ENCODE measurements at regions of chr16 and their contacts with region 1.

Region 1: DNA sequence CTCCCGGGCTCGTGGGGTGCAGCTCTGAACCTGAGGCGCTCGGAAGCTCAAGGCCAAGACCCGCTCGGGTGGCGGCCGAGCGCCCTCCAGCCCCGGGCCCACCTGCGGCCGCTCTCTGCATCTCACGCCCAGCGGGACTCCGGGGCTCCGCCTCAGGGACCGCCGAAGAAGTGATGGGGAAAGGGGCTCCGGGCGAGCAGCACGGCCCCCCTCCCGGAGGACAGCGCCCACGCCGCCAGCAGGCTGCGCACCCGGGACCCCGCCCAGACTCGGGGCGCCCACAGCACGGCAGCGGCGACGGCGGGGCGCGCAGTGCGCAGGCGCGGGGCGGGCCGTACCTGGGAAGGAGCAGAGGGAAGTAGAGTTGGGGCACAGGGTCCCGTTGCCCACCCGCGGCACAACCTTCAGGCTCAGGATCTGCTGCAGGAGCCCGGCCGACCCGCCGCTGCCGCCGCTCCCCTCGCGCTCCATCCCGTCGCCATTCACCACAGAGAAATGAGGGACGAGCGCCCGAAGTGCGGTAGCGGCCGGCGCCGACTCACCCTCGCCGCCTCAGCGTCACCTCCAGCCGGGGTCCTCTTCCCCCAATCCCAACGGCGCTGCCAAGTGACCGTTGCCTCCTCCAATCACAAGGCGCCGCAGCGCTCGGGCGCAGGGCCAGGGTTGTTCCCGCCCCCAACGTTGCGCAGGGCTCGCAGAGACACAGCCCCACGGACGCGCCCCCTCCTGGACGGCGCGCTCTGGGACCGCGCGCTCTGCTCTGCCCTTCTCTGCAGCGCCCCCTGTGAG is at the start of gene TMEM170A:
- DNase-seq: peak; percentile 99
- H3K4me3 Mint-ChIP-seq: peak within 1 kb of the TSS; percentile 94
- H3K27ac Mint-ChIP-seq: peak within 1 kb of the TSS; percentile 95
- H3K4me1 Mint-ChIP-seq: peaks cover 45% of the 10 kb centered on the region
- H3K27me3 Mint-ChIP-seq: peaks cover 7% of the 10 kb centered on the region
- total RNA-seq, gene TMEM170A: 42.1 and 42.7 TPM in 2 replicates

Region 2: DNA sequence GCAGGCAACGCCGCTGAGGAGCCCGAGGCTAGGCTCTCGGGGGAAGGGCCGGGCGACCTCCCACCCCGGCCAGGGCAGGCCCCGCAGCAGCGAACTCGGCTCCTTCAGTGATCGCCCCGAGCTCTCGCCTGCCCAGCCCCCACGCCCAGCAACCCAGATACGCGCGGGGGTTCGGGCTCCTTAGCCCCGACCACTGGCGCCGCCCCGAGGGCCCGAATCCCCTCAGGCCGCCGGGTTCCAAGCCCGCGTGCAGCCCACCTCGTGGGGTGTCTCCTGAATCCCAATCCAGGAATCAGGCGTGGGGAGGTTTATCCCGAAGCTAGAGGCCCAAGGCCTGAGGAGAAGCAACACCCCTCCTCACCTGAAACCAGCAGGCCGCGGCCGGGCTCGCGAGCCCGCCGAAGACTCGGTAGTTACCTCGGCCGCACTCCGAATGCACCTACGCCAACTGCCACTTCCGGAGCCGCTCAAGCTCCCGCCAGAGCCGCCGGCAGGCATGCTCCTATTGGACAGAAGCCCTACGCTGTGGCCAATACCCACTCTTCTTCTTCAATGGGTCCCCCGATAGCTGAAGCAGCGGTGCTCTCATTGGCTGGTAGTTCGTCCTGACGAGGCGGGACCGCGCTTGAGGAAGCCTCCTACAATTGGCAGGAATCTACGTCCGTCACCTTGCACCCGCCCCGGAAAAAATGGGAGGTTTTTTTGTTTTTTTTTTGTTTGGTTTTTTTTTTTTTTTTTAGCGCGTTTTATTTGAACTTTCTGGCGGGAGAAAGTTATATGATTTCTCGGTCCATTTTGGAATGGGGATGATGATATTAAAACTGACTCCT is 797.7 kb before region 1 on chr16 and contains the start of gene RFWD3:
- intact Hi-C with region 1: loop called (anchors 5 kb)
- DNase-seq: peak; percentile 96
- H3K4me3 Mint-ChIP-seq: peak within 1 kb of the TSS; percentile 91
- H3K27ac Mint-ChIP-seq: peak within 1 kb of the TSS; percentile 96
- H3K4me1 Mint-ChIP-seq: peaks cover 43% of the 10 kb centered on the region
- H3K27me3 Mint-ChIP-seq: no peaks in the 10 kb centered on the region
- total RNA-seq, gene RFWD3: 112 and 116 TPM in 2 replicates

Region 3: GRCh38 chr16:75198135-75198600 is 266.2 kb before region 1 on chr16:
- intact Hi-C with region 1: loop called (anchors 1 kb)
- DNase-seq: no peak
- H3K4me3 Mint-ChIP-seq: no peak overlapping the region
- H3K27ac Mint-ChIP-seq: no peak overlapping the region
- H3K4me1 Mint-ChIP-seq: peaks cover 11% of the 10 kb centered on the region
- H3K27me3 Mint-ChIP-seq: peaks cover 35% of the 10 kb centered on the region

Region 4: GRCh38 chr16:75265845-75266701 is 198.3 kb before region 1 on chr16:
- intact Hi-C with region 1: no loop called
- DNase-seq: no peak
- H3K4me3 Mint-ChIP-seq: peak overlapping the region; percentile 52
- H3K27ac Mint-ChIP-seq: no peak overlapping the region
- H3K4me1 Mint-ChIP-seq: no peaks in the 10 kb centered on the region
- H3K27me3 Mint-ChIP-seq: peaks cover 34% of the 10 kb centered on the region

Region 5: DNA sequence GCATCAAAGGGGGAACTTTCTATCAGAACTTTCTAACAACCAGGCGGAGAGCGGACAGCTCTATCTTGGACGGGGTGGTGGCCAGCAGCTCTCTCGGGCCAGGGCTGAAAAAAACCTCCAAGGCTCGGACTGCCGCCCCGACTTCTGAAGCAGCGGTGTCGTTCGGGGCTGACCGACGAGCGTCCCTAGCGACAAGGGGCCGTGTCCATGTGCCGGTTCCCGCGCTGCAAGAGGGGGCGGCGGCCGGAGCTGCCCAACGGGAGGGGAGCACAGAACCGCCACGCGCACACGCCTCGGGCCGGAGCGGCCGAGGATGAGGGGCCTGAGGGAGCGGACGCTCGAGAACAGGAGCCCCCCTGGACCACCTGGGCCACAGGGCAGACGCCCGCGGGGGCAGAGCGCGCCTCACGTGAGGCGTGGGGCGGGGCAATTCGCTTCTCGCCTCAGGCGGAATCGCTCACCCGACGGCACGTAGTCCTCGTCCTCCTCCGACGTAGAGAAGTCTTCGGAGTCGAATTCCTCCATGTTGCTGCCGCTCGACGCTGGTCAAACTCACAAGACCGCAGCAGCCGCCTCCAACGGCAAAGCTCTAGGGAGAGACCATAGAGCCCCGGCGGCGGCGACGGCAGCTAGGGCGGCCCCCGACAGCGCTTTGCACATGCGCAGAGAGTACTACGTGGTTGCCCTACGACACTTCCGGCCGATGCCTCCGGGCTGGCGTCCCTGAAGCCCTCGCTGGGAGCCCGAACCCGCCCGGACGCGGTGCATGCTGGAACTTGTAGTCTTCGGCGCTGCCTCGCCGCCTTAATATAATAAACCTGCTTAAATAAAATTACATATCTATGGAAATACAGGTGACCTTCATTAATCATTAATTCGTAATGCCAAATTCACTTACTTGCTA is 31.2 kb before region 1 on chr16 and contains the start of gene CFDP1:
- intact Hi-C with region 1: loop called (anchors 1 kb)
- DNase-seq: peak; percentile 93
- H3K4me3 Mint-ChIP-seq: peak within 1 kb of the TSS; percentile 85
- H3K27ac Mint-ChIP-seq: peak within 1 kb of the TSS; percentile 99
- H3K4me1 Mint-ChIP-seq: peaks cover 21% of the 10 kb centered on the region
- H3K27me3 Mint-ChIP-seq: no peaks in the 10 kb centered on the region
- total RNA-seq, gene CFDP1: 35.4 TPM in 2 replicates

Region 6: GRCh38 chr16:75555707-75556430 is 91.5 kb after region 1 on chr16 and contains the start of gene TMEM231:
- intact Hi-C with region 1: loop called (anchors 2 kb)
- DNase-seq: peak; percentile 95
- H3K4me3 Mint-ChIP-seq: peak within 1 kb of the TSS; percentile 92
- H3K27ac Mint-ChIP-seq: peak within 1 kb of the TSS; percentile 89
- H3K4me1 Mint-ChIP-seq: peaks cover 11% of the 10 kb centered on the region
- H3K27me3 Mint-ChIP-seq: peaks cover 7% of the 10 kb centered on the region
- total RNA-seq, gene TMEM231: 4.5 and 4.7 TPM in 2 replicates

Region 7: DNA sequence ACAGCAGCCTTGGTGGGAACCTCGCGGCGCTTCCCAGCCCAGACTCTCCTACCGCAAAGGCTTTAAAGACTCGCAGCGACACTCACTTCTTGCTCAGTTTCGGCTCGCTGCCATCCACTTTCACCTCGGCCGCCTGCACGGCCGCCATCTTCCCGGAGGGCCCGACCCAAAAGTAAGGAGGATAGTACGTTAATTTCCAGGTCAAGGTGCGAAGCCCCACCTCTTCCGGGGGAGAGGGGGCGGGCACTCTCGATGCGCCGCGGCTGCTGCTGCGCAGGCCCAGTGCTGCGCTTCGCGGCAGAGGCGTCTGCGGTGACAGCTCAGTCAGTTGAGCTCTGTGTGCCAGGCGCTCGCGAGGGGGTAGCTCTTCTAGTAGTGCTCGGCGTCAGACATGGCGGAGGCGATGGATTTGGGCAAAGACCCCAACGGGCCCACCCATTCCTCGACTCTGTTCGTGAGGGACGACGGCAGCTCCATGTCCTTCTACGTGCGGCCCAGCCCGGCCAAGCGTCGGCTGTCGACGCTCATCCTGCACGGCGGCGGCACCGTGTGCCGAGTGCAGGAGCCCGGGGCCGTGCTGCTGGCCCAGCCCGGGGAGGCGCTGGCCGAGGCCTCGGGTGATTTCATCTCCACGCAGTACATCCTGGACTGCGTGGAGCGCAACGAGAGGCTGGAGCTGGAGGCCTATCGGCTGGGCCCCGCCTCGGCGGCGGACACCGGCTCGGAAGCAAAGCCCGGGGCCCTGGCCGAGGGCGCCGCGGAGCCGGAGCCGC is 183.4 kb after region 1 on chr16 and contains the starts of genes KARS1 and TERF2IP:
- intact Hi-C with region 1: loop called (anchors 1 kb)
- DNase-seq: peak; percentile 96
- H3K4me3 Mint-ChIP-seq: peak within 1 kb of the TSS; percentile 96
- H3K27ac Mint-ChIP-seq: peak within 1 kb of the TSS; percentile 97
- H3K4me1 Mint-ChIP-seq: peaks cover 58% of the 10 kb centered on the region
- H3K27me3 Mint-ChIP-seq: no peaks in the 10 kb centered on the region
- total RNA-seq, gene KARS1: 256 and 271 TPM in 2 replicates
- total RNA-seq, gene TERF2IP: 94.3 and 98.5 TPM in 2 replicates